Gastrocnemius medialis (tissue), 4 donors: ENCODE measurements at regions of chr1 and their contacts with region 1.

Region 1: DNA sequence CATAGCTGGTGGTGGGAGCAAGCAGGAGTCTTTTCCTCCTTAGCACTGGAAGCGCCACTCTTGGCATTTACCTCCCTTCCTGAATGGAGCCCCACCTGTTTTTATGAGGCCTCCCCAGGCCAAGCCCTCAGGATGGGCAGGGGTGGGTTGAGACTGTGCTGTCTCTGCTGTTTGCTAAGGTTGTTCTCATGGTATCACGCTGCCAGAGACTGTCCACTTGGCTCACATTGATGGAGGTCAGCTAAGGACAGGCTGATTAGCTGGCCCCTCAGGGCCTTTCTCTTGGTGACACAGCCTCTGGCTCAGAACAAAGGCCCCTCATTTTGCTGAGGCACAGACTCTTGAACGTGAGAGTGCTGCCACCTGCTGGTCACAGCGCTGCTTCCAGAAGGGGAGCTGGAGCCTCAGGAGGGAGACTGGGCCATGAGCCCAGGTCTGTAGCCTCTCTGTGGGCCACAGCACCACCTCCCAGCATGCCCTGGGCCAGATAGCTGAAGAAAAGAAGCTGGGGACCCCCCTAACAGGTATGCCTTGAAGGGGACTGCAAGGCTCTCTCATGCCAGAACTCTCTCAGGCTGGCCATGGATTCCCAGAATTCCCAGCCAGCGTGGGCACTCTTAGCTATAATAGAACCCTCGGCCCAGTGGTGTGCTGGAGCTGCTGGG is 85.6 kb downstream of the CD58 start:
- DNase-seq: peak; percentile 61 to 80
- ATAC-seq: peak; percentile 72 to 80
- H3K4me3 ChIP-seq: no peak overlapping the region
- H3K27ac ChIP-seq: peak overlapping the region in 3 of 4 donors; percentile 25 to 49 (median 48)
- H3K4me1 ChIP-seq: peaks cover 4 to 36% of the 10 kb centered on the region in 2 donors
- H3K27me3 ChIP-seq: no peaks in the 10 kb centered on the region
- CTCF ChIP-seq: peak; percentile 80 to 95 (median 93)
- POLR2A ChIP-seq: no peak

Region 2: DNA sequence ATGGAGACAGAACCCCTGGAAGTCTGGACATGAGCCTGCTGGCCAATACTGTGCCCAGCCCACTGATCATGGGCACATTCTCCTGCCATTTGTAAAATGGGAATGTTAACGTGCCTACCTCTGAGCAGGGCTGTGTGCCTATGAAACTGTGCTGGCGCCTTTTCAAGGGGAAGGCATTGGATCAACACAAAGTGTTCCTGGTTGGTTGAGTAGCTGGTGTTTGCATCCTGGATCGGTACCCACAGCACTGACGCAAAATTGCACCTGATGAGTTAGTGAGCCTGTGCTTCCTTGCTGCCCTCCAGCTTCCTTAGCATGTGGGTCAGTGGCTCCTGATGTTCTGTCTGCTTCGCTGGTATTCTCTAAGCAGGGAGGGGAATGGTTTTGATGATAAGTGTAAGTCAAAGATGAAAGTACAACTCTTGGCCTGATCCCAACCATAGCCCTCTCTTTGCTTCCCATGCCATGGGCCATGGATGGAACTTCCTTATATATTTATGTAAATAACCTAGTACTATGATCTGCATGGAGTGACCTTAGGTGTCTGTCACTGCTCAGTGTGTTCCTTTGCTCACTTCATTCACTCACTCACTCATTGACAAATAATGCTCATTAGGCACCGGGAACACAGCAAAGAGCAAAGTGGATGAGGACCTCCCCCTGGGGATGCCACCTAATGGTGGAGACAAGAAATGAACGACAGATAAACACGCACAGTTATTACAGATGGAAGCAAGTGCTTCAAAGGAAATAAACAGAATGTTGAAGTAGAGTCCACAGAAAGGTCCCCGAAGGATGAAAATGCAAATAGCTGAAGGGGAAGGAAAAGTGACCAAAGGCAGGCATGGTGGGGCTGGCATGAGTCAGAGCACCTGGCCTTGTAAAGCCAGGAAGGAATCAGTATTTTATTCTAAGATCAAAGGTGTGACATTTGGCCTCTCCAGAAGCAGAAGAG is 351.2 kb before region 1 on chr1:
- in situ Hi-C with region 1: loop called in 1 of 4 experiments (anchors 5 kb)
- intact Hi-C with region 1: no loop called
- DNase-seq: no peak
- ATAC-seq: no peak
- H3K4me3 ChIP-seq: no peak overlapping the region
- H3K27ac ChIP-seq: no peak overlapping the region
- H3K4me1 ChIP-seq: no peaks in the 10 kb centered on the region
- H3K27me3 ChIP-seq: no peaks in the 10 kb centered on the region
- CTCF ChIP-seq: no peak
- POLR2A ChIP-seq: no peak

Region 3: GRCh38 chr1:116257341-116257767 is 227.8 kb before region 1 on chr1:
- in situ Hi-C with region 1: no loop called
- intact Hi-C with region 1: loop called (anchors 5 kb)
- DNase-seq: no peak
- ATAC-seq: no peak
- H3K4me3 ChIP-seq: no peak overlapping the region
- H3K27ac ChIP-seq: no peak overlapping the region
- H3K4me1 ChIP-seq: no peaks in the 10 kb centered on the region
- H3K27me3 ChIP-seq: no peaks in the 10 kb centered on the region
- CTCF ChIP-seq: no peak
- POLR2A ChIP-seq: no peak

Region 4: DNA sequence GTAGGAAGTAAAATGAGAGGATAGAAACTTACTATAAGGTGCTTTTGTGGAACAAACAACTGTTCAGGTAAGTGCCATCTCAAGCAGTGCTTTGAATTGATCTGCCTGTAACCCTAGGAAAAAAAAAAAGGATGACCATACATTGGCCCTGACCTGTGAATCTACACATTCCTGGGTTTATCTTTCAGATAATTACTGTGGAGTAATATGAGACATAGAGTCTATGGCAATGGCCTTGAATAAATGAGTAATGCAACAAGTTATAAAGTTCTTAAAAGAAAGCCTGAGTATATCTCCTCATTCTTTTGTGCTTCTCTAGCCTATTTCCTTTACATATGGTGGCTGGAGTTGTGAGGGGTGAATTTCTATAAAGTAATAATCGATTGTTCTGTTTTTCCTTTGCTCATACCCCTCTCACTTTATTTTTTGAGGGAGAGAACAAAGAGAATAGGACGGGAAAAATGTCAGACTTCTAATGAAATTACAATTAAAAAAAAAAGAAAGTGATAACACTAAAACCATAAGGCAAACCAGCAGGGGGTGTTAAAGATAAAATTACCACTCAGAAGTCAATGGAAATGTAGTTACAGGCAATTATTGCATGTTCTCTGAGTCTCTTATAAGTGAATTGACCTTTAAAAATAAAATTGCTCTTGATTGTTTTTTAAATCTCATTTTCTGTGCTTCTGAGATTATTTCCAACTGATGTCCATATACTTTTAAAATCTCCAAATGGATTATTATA is 124.6 kb before region 1 on chr1:
- in situ Hi-C with region 1: loop called in 2 of 4 experiments (anchors 5 to 25 kb)
- intact Hi-C with region 1: no loop called
- DNase-seq: no peak
- ATAC-seq: no peak
- H3K4me3 ChIP-seq: no peak overlapping the region
- H3K27ac ChIP-seq: no peak overlapping the region
- H3K4me1 ChIP-seq: peaks cover under 1 to 6% of the 10 kb centered on the region in 2 donors
- H3K27me3 ChIP-seq: no peaks in the 10 kb centered on the region
- CTCF ChIP-seq: peak in 3 of 5 experiments; percentile 20 to 44 (median 32)
- POLR2A ChIP-seq: no peak

Region 5: GRCh38 chr1:116418091-116418830 is 66.9 kb before region 1 on chr1:
- in situ Hi-C with region 1: no loop called
- intact Hi-C with region 1: loop called (anchors 2 kb)
- DNase-seq: peak; percentile 57 to 69
- ATAC-seq: peak; percentile 71 to 93
- H3K4me3 ChIP-seq: peak overlapping the region; percentile 75 to 87 (median 81)
- H3K27ac ChIP-seq: peak overlapping the region; percentile 61 to 81 (median 78)
- H3K4me1 ChIP-seq: peaks cover 19 to 31% of the 10 kb centered on the region in 2 donors
- H3K27me3 ChIP-seq: no peaks in the 10 kb centered on the region
- CTCF ChIP-seq: peak in 2 of 5 experiments; percentile 14 to 40
- POLR2A ChIP-seq: peak; percentile 48 to 62

Region 6: DNA sequence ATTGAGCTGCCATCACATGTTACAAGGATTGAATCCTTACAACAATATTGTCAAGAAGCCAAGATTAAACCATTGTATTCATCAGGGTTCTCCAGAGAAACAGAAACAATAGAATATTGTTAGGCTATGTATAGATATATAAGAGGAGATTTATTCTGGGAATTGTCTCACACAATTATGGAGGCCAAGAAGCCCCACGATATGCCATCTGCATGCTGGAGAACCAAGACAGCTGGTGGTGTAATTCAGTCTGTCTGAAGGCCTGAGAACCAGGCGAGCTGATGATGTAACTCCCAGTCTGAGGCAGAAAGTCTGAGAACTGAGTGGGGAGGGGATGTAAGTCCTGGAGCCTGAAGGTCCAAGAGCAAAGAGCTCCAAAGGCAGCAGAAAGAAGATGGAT is 560.4 kb after region 1 on chr1:
- in situ Hi-C with region 1: no loop called
- intact Hi-C with region 1: no loop called
- DNase-seq: no peak
- ATAC-seq: no peak
- H3K4me3 ChIP-seq: no peak overlapping the region
- H3K27ac ChIP-seq: no peak overlapping the region
- H3K4me1 ChIP-seq: no peaks in the 10 kb centered on the region
- H3K27me3 ChIP-seq: no peaks in the 10 kb centered on the region
- CTCF ChIP-seq: no peak
- POLR2A ChIP-seq: no peak

Region 7: DNA sequence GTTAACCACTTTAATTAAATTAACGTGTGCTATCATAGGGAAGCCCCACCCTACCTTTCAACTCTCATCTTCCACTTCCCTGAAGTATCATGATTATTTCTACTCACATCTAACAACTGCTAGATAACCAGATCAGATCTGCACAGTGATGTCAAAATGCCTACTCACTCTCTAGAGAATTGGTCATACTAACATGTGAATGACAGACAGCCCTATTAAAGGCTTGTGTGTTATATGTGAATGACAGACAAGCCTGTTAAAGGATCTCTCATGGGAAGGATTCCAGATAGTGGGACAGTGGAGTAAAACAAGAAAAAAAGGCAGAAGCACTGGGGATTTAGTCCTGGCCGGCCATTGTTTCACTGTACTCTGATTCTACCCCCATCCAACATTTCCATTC is 712.9 kb after region 1 on chr1:
- in situ Hi-C with region 1: no loop called
- intact Hi-C with region 1: no loop called
- DNase-seq: no peak
- ATAC-seq: no peak
- H3K4me3 ChIP-seq: no peak overlapping the region
- H3K27ac ChIP-seq: no peak overlapping the region
- H3K4me1 ChIP-seq: no peaks in the 10 kb centered on the region
- H3K27me3 ChIP-seq: no peaks in the 10 kb centered on the region
- CTCF ChIP-seq: no peak
- POLR2A ChIP-seq: no peak